ENCODE measurements at regions of chrX and their contacts with region 1.

Region 1: GRCh38 chrX:138745196-138745595 is 33.7 kb upstream of the FGF13 start:
- DNase-seq: peak; percentile 52
- H3K4me3 ChIP-seq: no peak overlapping the region
- H3K27ac ChIP-seq: no peak overlapping the region
- H3K4me1 ChIP-seq: no peaks in the 10 kb centered on the region
- H3K27me3 ChIP-seq: no peaks in the 10 kb centered on the region

Region 2: GRCh38 chrX:138191998-138192397 is 553.2 kb before region 1 on chrX:
- in situ Hi-C with region 1: loop called (anchors 10 kb)
- DNase-seq: peak; percentile 50
- H3K4me3 ChIP-seq: no peak overlapping the region
- H3K27ac ChIP-seq: no peak overlapping the region
- H3K4me1 ChIP-seq: no peaks in the 10 kb centered on the region
- H3K27me3 ChIP-seq: no peaks in the 10 kb centered on the region

Region 3: DNA sequence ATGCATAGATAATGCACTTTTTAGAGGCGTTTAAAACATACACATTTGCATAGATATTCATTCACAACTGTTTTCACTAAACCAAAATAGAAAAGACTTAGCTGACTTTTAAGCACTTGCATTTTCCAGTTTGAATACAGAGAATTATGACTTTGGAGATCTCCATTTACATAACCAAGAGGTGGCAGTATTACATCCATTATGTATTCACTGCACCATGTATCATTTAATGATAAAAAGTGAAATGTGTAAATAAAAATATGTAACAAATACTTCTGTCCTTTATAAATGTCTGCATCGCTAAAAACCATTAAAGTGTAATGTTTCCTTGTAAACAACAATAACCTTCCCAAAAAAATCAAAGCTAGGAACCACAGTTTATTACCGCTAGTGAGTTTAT is 446.9 kb before region 1 on chrX:
- in situ Hi-C with region 1: loop called (anchors 25 kb)
- DNase-seq: peak; percentile 20
- H3K4me3 ChIP-seq: no peak overlapping the region
- H3K27ac ChIP-seq: no peak overlapping the region
- H3K4me1 ChIP-seq: no peaks in the 10 kb centered on the region
- H3K27me3 ChIP-seq: no peaks in the 10 kb centered on the region

Region 4: DNA sequence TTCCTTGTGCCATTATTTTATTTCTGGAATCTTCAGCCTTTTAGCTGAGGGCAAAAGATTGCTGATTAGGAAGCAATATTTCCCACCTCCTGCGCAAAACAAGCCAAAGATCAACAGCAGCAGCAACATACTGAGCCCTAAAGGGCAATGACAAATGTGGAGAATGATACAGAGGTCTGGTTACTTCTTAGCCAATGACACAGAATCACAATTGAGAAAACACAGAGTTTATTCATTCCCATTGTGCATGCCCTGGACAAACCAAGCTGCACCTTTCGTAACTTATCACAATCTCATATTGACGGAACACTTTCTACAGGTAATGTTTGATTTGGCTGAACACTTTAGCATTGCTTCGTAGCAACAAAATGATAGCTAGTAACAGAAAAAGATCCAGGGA is 798.7 kb after region 1 on chrX:
- in situ Hi-C with region 1: no loop called
- DNase-seq: no peak
- H3K4me3 ChIP-seq: no peak overlapping the region
- H3K27ac ChIP-seq: no peak overlapping the region
- H3K4me1 ChIP-seq: no peaks in the 10 kb centered on the region
- H3K27me3 ChIP-seq: no peaks in the 10 kb centered on the region